Naive thymus-derived CD8-positive, alpha-beta T cell (primary cell): ENCODE measurements at regions of chr11 and their contacts with region 1.

Region 1: DNA sequence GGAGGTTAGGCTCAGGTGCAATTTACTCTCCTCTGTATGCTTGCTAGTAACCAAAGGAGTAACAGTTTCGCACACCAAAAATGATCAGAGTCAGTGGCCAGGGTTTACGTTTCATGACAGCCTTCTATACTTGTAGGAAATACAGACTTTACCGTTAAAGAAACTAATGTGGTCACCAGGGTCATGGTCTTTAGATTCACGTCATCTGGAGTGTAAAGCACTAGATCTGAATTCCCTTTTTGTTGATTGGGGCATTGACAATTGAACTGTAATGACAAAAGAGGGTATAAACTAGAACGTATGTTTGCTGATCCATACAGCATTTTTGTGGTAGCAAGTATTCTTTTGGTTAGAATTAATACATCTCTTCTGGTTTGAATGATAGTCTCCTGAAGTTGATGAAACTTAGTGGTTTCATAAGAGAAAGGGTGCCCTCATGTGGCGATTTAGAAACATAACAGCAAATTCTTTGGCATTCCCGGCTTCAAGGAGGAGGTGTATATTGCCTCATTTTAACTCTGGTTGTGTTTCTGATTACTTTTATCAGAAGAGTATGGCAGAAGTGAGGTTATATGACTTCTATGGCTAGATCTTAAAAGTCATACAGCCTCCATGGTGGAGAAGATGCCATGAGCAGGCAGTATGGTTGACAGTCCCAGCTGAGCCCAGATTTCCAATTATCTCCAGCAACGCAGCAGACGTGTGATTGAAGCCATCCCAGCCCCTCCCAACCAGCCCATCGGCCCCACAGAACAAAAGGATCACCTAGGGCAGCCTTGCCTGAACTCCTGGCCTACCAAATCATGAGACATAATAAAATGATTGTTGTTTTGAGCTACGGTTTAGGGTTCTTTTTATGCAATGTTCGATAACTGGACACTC is 35.1 kb downstream of the MMP7 start:
- DNase-seq: peak in 9 of 10 donors; percentile 23 to 79 (median 57)
- ATAC-seq: peak; percentile 76 to 85
- H3K4me3 Mint-ChIP-seq: no peak overlapping the region
- H3K27ac Mint-ChIP-seq: peak overlapping the region in 5 of 10 donors; percentile 19 to 75 (median 33)
- H3K4me1 Mint-ChIP-seq: peaks cover 5 to 17% (median 11%) of the 10 kb centered on the region in 4 donors
- H3K27me3 Mint-ChIP-seq: peaks cover 0 to 4% (median 1%) of the 10 kb centered on the region in 5 donors

Region 2: GRCh38 chr11:102390667-102391465 is 104.5 kb before region 1 on chr11:
- POLR2A ChIA-PET with region 1: interaction called, 10 read pairs
- DNase-seq: peak in 9 of 10 donors; percentile 18 to 74 (median 47)
- ATAC-seq: peak; percentile 62 to 69
- H3K4me3 Mint-ChIP-seq: peak overlapping the region in 1 of 10 donors; percentile 19
- H3K27ac Mint-ChIP-seq: peak overlapping the region in 9 of 10 donors; percentile 3 to 87 (median 81)
- H3K4me1 Mint-ChIP-seq: peaks cover 16 to 50% (median 45%) of the 10 kb centered on the region in 4 donors
- H3K27me3 Mint-ChIP-seq: no peaks in the 10 kb centered on the region